Activated CD4-positive, alpha-beta T cell treated with anti-CD3 and anti-CD28 coated beads for 36 hours (primary cell): ENCODE measurements at regions of chr11 and their contacts with region 1.

Region 1: GRCh38 chr11:7353100-7353499 is 101.4 kb downstream of the SYT9 start:
- DNase-seq: peak; percentile 40
- ATAC-seq: peak; percentile 39
- H3K4me3 Mint-ChIP-seq: no peak overlapping the region
- H3K27ac Mint-ChIP-seq: no peak overlapping the region
- H3K4me1 Mint-ChIP-seq: no peaks in the 10 kb centered on the region
- H3K27me3 Mint-ChIP-seq: peaks cover 8% of the 10 kb centered on the region

Region 2: DNA sequence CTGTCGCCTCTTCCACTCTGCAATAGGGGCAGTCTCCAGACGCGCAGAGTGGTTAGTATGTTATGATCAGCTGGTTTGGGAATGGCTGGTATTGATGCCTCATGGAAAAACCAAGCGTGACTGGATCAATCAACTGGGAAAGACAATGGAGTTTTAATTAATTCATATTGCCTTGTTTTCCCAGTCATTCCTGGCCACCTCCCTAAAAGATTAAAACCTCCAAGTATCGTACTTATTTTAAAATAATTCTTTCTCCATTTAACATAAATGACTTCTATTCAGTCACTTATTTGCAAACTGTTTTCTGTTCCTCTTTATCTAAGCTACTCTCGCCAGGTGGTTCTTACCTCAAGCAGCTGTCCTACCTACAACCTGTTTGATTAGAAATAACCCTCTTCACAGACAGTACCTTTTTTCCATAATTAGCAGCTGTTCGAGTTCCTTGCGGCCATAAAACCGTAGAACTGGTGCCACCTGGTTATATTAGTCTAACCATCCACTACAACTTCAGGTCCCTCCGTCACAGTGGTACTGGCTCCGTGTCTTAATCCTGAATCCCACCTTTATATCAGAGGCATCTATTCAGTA is 426.0 kb before region 1 on chr11:
- CTCF ChIA-PET with region 1: no interaction called
- POLR2A ChIA-PET with region 1: no interaction called
- intact Hi-C with region 1: no loop called
- DNase-seq: no peak
- ATAC-seq: no peak
- H3K4me3 Mint-ChIP-seq: peak overlapping the region; percentile 80
- H3K27ac Mint-ChIP-seq: peak overlapping the region; percentile 51
- H3K4me1 Mint-ChIP-seq: peaks cover 26% of the 10 kb centered on the region
- H3K27me3 Mint-ChIP-seq: peaks cover 36% of the 10 kb centered on the region

Region 3: GRCh38 chr11:7555052-7555699 is 202.1 kb after region 1 on chr11:
- CTCF ChIA-PET with region 1: no interaction called
- POLR2A ChIA-PET with region 1: no interaction called
- intact Hi-C with region 1: no loop called
- DNase-seq: no peak
- ATAC-seq: no peak
- H3K4me3 Mint-ChIP-seq: no peak overlapping the region
- H3K27ac Mint-ChIP-seq: no peak overlapping the region
- H3K4me1 Mint-ChIP-seq: peaks cover 4% of the 10 kb centered on the region
- H3K27me3 Mint-ChIP-seq: no peaks in the 10 kb centered on the region

Region 4: GRCh38 chr11:7665473-7666291 is 312.6 kb after region 1 on chr11:
- CTCF ChIA-PET with region 1: interaction called, 3 read pairs
- POLR2A ChIA-PET with region 1: no interaction called
- intact Hi-C with region 1: loop called in 1 of 2 experiments (anchors 5 kb)
- DNase-seq: peak; percentile 90
- ATAC-seq: peak; percentile 98
- H3K4me3 Mint-ChIP-seq: no peak overlapping the region
- H3K27ac Mint-ChIP-seq: no peak overlapping the region
- H3K4me1 Mint-ChIP-seq: peaks cover 6% of the 10 kb centered on the region
- H3K27me3 Mint-ChIP-seq: no peaks in the 10 kb centered on the region

Region 5: DNA sequence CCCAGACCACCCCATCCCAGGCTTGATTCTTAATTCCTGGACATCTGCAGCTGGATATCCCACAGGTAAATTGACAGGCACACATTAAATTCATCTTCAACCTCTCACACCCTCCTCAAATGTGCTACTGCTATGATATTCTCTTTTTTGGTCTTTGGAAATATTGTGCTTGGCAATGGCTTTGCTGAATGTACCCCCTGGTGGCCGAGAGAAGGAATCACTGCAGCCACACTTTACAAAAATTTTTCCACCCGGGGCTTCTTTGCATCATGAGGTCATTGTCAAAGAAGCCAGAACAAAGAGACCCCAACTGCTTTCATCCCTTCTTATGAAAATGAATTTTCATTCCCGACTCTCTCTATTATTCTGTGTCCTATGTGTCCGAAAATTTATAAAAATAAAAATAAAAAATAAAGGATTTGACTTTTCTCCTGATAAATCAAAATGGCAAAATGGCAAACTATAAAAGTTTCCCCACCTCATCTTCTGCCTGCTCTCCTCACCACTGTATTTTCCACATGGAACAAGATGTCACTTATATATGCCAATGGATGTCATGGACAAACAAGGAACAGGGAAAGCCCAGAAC is 335.2 kb after region 1 on chr11:
- CTCF ChIA-PET with region 1: no interaction called
- POLR2A ChIA-PET with region 1: no interaction called
- intact Hi-C with region 1: loop called in 1 of 2 experiments (anchors 10 kb)
- DNase-seq: peak; percentile 38
- ATAC-seq: peak; percentile 44
- H3K4me3 Mint-ChIP-seq: no peak overlapping the region
- H3K27ac Mint-ChIP-seq: no peak overlapping the region
- H3K4me1 Mint-ChIP-seq: peaks cover 5% of the 10 kb centered on the region
- H3K27me3 Mint-ChIP-seq: peaks cover 30% of the 10 kb centered on the region

Region 6: DNA sequence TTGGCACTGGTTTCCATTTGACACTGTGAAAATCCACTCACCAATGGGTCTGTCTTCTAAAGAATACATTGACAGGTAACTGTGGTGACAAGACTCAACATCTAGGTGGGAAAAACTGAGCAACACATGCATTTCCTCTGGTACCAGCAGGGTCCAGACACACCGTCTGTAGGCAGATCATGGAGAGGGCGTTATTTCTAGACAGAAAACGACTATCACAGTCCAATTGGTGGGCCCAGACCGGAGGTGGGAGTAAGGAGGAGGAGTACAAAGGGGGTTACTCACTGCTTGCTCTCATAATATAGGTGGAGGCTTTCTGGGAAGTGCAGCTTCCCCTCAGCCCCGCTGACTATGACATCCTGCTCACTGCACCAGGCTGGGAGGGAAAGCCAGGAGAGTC is 343.3 kb after region 1 on chr11:
- CTCF ChIA-PET with region 1: no interaction called
- POLR2A ChIA-PET with region 1: no interaction called
- intact Hi-C with region 1: loop called (anchors 1 to 10 kb)
- DNase-seq: peak; percentile 20
- ATAC-seq: peak; percentile 75
- H3K4me3 Mint-ChIP-seq: no peak overlapping the region
- H3K27ac Mint-ChIP-seq: no peak overlapping the region
- H3K4me1 Mint-ChIP-seq: peaks cover 4% of the 10 kb centered on the region
- H3K27me3 Mint-ChIP-seq: peaks cover 24% of the 10 kb centered on the region